ENCODE measurements at regions of chr19 and their contacts with region 1.

Region 1: GRCh38 chr19:35693830-35694599 is 10.3 kb upstream of the ZBTB32 start:
- DNase-seq: peak; percentile 80 to 94 (median 91)
- ATAC-seq: peak; percentile 100
- H3K4me3 ChIP-seq: no peak overlapping the region
- H3K4me3 Mint-ChIP-seq: no peak overlapping the region
- H3K27ac ChIP-seq: no peak overlapping the region
- H3K27ac Mint-ChIP-seq: no peak overlapping the region
- H3K4me1 ChIP-seq: no peaks in the 10 kb centered on the region
- H3K4me1 Mint-ChIP-seq: no peaks in the 10 kb centered on the region
- H3K27me3 ChIP-seq: no peaks in the 10 kb centered on the region
- H3K27me3 Mint-ChIP-seq: no peaks in the 10 kb centered on the region
- CTCF ChIP-seq: peak; percentile 99

Region 2: GRCh38 chr19:35657904-35658700 is 35.9 kb before region 1 on chr19:
- CTCF ChIA-PET with region 1: no interaction called
- POLR2A ChIA-PET with region 1: no interaction called
- intact Hi-C with region 1: no loop called
- DNase-seq: no peak
- ATAC-seq: no peak
- H3K4me3 ChIP-seq: no peak overlapping the region
- H3K4me3 Mint-ChIP-seq: no peak overlapping the region
- H3K27ac ChIP-seq: no peak overlapping the region
- H3K27ac Mint-ChIP-seq: peak overlapping the region; percentile 52
- H3K4me1 ChIP-seq: no peaks in the 10 kb centered on the region
- H3K4me1 Mint-ChIP-seq: peaks cover 10% of the 10 kb centered on the region
- H3K27me3 ChIP-seq: no peaks in the 10 kb centered on the region
- H3K27me3 Mint-ChIP-seq: no peaks in the 10 kb centered on the region
- CTCF ChIP-seq: no peak

Region 3: DNA sequence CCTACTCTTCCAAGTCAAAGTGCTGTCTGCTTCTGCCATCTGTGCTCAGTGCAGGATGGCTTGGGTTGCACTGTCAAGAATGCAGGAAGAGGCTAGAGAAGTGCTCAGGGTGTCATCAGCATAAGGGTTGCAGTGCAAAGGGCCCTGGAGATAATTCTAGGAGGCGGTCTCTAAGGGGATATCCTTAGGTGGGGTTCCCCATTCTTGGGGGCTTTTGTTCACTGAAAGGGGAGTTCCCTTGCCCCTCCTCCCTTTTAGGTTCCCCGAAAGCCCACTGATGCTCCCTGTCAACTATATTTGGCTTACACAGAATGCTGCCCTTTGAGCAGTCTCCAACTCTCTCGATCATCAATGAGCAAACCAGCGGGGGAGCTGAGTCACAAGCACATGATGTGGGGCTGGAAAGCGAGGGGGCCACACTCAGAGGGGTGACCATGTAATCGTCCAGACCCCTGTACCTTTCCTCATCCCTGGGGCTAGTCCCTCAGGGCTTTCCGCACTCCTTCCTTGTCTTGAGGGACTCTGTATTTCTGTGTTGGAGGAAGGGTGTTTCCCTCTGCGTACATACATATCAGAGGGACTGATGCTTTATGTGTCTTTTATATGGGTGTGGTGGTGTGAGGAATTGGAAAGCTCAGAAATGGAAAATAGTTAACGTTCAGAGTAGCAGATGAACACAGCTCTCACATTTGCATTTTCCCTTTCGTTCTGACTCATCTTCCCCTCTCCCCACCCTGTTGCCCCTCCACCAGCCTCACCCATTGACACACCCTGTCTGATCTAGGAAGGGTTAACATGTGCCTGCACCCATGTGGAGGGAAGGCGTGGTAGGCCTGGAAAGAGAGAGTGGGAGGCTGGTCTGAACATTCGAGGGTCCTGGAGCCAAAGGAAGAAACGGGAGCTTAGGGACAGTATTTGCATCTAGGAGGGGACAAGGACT is 17.0 kb after region 1 on chr19:
- CTCF ChIA-PET with region 1: interaction called, 45 read pairs
- POLR2A ChIA-PET with region 1: no interaction called
- intact Hi-C with region 1: no loop called
- DNase-seq: peak in 2 of 9 experiments; percentile 50 to 69
- ATAC-seq: no peak
- H3K4me3 ChIP-seq: no peak overlapping the region
- H3K4me3 Mint-ChIP-seq: peak overlapping the region; percentile 22
- H3K27ac ChIP-seq: peak overlapping the region in 1 of 2 experiments; percentile 47
- H3K27ac Mint-ChIP-seq: peak overlapping the region; percentile 56
- H3K4me1 ChIP-seq: peaks cover 45% of the 10 kb centered on the region
- H3K4me1 Mint-ChIP-seq: peaks cover 47% of the 10 kb centered on the region
- H3K27me3 ChIP-seq: no peaks in the 10 kb centered on the region
- H3K27me3 Mint-ChIP-seq: no peaks in the 10 kb centered on the region
- CTCF ChIP-seq: no peak

Region 4: GRCh38 chr19:35740423-35741202 is 46.6 kb after region 1 on chr19:
- CTCF ChIA-PET with region 1: interaction called, 6 read pairs
- POLR2A ChIA-PET with region 1: no interaction called
- intact Hi-C with region 1: loop called (anchors 1 to 2 kb)
- DNase-seq: peak; percentile 87 to 97 (median 95)
- ATAC-seq: peak; percentile 65
- H3K4me3 ChIP-seq: peak overlapping the region; percentile 60 to 63
- H3K4me3 Mint-ChIP-seq: peak overlapping the region; percentile 87
- H3K27ac ChIP-seq: peak overlapping the region; percentile 50 to 58
- H3K27ac Mint-ChIP-seq: peak overlapping the region; percentile 83
- H3K4me1 ChIP-seq: peaks cover 51% of the 10 kb centered on the region
- H3K4me1 Mint-ChIP-seq: peaks cover 53% of the 10 kb centered on the region
- H3K27me3 ChIP-seq: no peaks in the 10 kb centered on the region
- H3K27me3 Mint-ChIP-seq: no peaks in the 10 kb centered on the region
- CTCF ChIP-seq: no peak

Region 5: DNA sequence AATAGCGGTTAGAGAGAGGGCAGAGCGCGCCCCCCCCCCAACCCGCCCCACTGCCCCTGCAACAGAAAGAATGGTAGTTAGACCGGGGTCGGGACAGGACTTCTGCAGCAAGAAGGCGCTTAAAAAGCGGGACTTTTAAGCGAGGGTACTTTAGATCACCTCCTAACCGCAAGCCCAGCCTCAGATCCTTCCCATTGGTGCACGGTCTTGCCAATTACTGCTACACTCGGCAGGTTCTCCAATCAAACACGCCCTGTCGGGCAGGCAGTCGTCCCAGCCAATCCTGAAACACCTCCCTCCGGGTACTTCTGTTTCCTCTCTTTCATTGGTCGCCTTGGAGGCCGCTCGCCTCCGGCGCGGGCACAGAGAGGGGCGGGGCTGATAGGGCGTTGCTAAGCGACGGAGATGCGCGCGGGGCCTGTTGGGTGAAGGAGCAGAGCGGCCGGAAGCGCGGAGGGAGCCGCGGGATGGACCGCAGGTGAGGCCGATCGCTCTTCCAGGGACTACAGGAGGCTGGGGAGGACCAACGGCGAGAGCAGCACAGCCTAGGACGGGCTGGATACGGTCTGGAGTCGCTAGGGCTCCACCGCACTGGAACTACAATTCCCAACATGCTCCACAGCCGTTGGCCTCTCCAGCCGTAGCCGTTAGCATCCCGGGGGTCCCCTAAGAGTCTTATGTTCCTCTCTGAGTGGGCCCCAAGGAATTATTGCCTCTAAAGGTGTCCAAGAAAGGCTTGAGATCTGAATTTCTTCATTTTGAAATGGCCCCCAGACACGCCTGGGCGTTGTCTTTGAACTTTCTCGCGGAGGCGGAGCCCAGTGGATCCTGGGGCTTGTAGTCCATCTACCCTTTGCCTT is 64.0 kb after region 1 on chr19 and contains the start of gene PROSER3:
- CTCF ChIA-PET with region 1: interaction called, 3 read pairs
- POLR2A ChIA-PET with region 1: no interaction called
- intact Hi-C with region 1: loop called (anchors 1 kb)
- DNase-seq: peak; percentile 96 to 99 (median 98)
- ATAC-seq: peak; percentile 95
- H3K4me3 ChIP-seq: peak within 1 kb of the TSS; percentile 98 to 100
- H3K4me3 Mint-ChIP-seq: peak within 1 kb of the TSS; percentile 96
- H3K27ac ChIP-seq: peak within 1 kb of the TSS; percentile 95 to 97
- H3K27ac Mint-ChIP-seq: peak within 1 kb of the TSS; percentile 97
- H3K4me1 ChIP-seq: peaks cover 25% of the 10 kb centered on the region
- H3K4me1 Mint-ChIP-seq: peaks cover 34% of the 10 kb centered on the region
- H3K27me3 ChIP-seq: no peaks in the 10 kb centered on the region
- H3K27me3 Mint-ChIP-seq: peaks cover 9% of the 10 kb centered on the region
- CTCF ChIP-seq: no peak
- total RNA-seq, gene PROSER3: 17.3 to 19.5 TPM

Region 6: GRCh38 chr19:35822579-35822978 is 128.6 kb after region 1 on chr19:
- CTCF ChIA-PET with region 1: interaction called, 19 read pairs
- POLR2A ChIA-PET with region 1: no interaction called
- intact Hi-C with region 1: loop called in 1 of 2 experiments (anchors 1 kb)
- DNase-seq: no peak
- ATAC-seq: no peak
- H3K4me3 ChIP-seq: no peak overlapping the region
- H3K4me3 Mint-ChIP-seq: no peak overlapping the region
- H3K27ac ChIP-seq: no peak overlapping the region
- H3K27ac Mint-ChIP-seq: no peak overlapping the region
- H3K4me1 ChIP-seq: no peaks in the 10 kb centered on the region
- H3K4me1 Mint-ChIP-seq: no peaks in the 10 kb centered on the region
- H3K27me3 ChIP-seq: peaks cover 0 to 6% of the 10 kb centered on the region in 2 experiments
- H3K27me3 Mint-ChIP-seq: peaks cover 27% of the 10 kb centered on the region
- CTCF ChIP-seq: no peak

Region 7: DNA sequence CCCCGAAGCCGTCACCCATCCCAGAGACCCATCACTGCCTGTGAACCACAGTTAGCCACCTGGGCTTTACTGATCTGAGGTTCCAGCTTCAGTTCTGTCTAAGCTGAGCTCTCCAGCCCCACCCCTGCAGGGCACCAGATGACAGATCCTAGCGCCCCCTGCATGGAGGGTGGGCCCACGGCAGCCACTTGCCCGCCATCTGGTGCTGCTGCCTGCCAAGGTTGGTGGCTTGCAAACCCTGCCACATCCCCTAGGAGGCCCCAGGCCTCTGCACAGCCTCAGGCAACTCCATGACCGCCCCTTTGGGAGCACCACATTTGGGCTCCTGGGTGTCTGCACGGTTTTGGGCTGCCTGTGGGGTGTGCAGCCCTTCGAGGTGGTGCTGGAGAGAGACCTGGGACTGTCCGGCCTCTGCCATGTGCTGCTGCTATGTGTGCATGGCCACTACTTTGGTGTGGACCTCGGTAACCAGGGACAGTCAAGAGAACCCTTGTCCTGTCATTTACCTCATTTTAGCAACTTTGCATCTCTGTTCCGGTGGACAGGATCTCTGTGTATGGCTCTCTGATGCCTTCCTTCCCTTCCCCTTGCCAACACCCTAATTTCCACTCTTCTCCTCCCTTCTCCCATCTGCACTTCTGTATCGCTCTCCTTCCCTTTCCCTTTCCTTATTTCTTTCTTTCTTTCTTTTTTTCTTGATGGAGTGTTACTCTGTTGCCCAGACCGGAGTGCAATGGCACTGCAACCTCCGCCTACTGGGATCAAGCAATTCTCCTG is 283.6 kb after region 1 on chr19:
- CTCF ChIA-PET with region 1: no interaction called
- POLR2A ChIA-PET with region 1: no interaction called
- intact Hi-C with region 1: no loop called
- DNase-seq: peak in 3 of 9 experiments; percentile 39 to 45 (median 42)
- ATAC-seq: peak; percentile 54
- H3K4me3 ChIP-seq: no peak overlapping the region
- H3K4me3 Mint-ChIP-seq: no peak overlapping the region
- H3K27ac ChIP-seq: no peak overlapping the region
- H3K27ac Mint-ChIP-seq: no peak overlapping the region
- H3K4me1 ChIP-seq: no peaks in the 10 kb centered on the region
- H3K4me1 Mint-ChIP-seq: no peaks in the 10 kb centered on the region
- H3K27me3 ChIP-seq: peaks cover 0 to 3% of the 10 kb centered on the region in 2 experiments
- H3K27me3 Mint-ChIP-seq: peaks cover 25% of the 10 kb centered on the region
- CTCF ChIP-seq: no peak

Region 8: GRCh38 chr19:36128392-36128736 is 434.3 kb after region 1 on chr19:
- CTCF ChIA-PET with region 1: no interaction called
- POLR2A ChIA-PET with region 1: no interaction called
- intact Hi-C with region 1: no loop called
- DNase-seq: no peak
- ATAC-seq: no peak
- H3K4me3 ChIP-seq: peak overlapping the region; percentile 56 to 92
- H3K4me3 Mint-ChIP-seq: peak overlapping the region; percentile 90
- H3K27ac ChIP-seq: peak overlapping the region; percentile 55 to 63
- H3K27ac Mint-ChIP-seq: peak overlapping the region; percentile 93
- H3K4me1 ChIP-seq: peaks cover 5% of the 10 kb centered on the region
- H3K4me1 Mint-ChIP-seq: peaks cover 16% of the 10 kb centered on the region
- H3K27me3 ChIP-seq: no peaks in the 10 kb centered on the region
- H3K27me3 Mint-ChIP-seq: no peaks in the 10 kb centered on the region
- CTCF ChIP-seq: no peak